CD8-positive, alpha-beta T cell (primary cell): ENCODE measurements at regions of chr16 and their contacts with region 1.

Region 1: DNA sequence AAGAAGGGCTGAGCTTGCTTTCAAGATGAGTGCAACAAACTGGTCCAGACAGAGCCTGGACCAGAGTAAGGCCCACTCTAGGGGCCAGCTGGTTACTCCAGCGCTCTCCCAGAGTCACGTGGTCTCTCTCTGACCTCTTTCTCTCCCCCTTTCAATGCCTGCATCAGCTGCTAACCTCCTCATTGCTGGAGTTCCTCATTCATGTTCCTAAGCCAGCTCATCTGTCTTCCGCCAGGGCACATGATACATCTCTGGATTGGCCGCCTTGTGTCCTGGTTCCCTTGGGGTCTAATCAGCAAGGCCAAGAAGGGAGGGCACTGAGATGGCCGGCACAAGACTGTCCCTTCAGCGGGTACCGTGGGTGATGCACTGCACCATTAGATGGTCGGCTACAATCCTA is 26.9 kb upstream of the ZFP90 start:
- DNase-seq: no peak
- ATAC-seq: no peak
- H3K4me3 ChIP-seq: no peak overlapping the region
- H3K4me3 Mint-ChIP-seq: no peak overlapping the region
- H3K27ac ChIP-seq: no peak overlapping the region
- H3K27ac Mint-ChIP-seq: no peak overlapping the region
- H3K4me1 ChIP-seq: peaks cover 6% of the 10 kb centered on the region
- H3K4me1 Mint-ChIP-seq: peaks cover 2% of the 10 kb centered on the region
- H3K27me3 ChIP-seq: no peaks in the 10 kb centered on the region
- H3K27me3 Mint-ChIP-seq: no peaks in the 10 kb centered on the region
- CTCF ChIP-seq: no peak

Region 2: DNA sequence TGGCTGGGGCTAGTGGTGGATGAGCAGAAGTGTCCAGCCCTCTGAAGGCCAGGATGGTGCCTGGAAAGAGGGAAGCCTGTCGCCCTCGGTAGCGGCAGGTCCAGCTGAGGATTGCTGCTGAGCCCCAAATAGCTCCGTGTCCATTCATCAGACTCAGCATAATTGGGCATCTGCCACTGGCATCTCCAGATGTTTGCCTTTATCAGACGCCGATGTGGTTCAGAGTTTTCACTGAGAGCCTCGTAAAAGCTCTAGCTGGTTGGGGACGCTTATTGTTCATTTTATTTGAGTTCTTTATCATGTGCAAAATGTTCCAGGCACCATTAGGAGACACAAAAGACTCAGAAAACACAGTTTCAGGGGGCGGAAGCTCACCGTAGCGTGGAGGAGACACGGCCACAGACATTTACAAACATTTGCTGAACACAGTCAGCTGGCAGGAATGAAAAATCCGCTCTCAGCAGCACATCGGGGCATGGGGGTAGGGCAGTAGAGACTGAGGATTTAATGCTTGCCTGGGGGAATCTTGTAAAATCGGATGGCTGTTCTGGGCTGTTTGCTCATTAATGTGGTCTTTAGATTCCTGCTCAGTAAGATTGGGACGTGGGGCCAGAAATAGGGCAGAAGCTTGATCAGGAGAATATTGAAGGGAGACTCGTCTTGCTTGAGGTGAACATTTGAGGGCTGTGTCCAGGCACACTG is 105.6 kb before region 1 on chr16:
- CTCF ChIA-PET with region 1: interaction called, 360 read pairs
- POLR2A ChIA-PET with region 1: no interaction called
- intact Hi-C with region 1: no loop called
- DNase-seq: no peak
- ATAC-seq: no peak
- H3K4me3 ChIP-seq: no peak overlapping the region
- H3K4me3 Mint-ChIP-seq: no peak overlapping the region
- H3K27ac ChIP-seq: no peak overlapping the region
- H3K27ac Mint-ChIP-seq: no peak overlapping the region
- H3K4me1 ChIP-seq: no peaks in the 10 kb centered on the region
- H3K4me1 Mint-ChIP-seq: no peaks in the 10 kb centered on the region
- H3K27me3 ChIP-seq: no peaks in the 10 kb centered on the region
- H3K27me3 Mint-ChIP-seq: peaks cover 4% of the 10 kb centered on the region
- CTCF ChIP-seq: no peak

Region 3: GRCh38 chr16:68448360-68448970 is 63.7 kb before region 1 on chr16 and contains the start of gene SMPD3:
- CTCF ChIA-PET with region 1: interaction called, 3 read pairs
- POLR2A ChIA-PET with region 1: no interaction called
- intact Hi-C with region 1: loop called (anchors 2 to 5 kb)
- DNase-seq: peak; percentile 96 to 99 (median 98)
- ATAC-seq: peak; percentile 98
- H3K4me3 ChIP-seq: peak within 1 kb of the TSS; percentile 46 to 49
- H3K4me3 Mint-ChIP-seq: peak within 1 kb of the TSS; percentile 68
- H3K27ac ChIP-seq: peak within 1 kb of the TSS in 1 of 2 experiments; percentile 37
- H3K27ac Mint-ChIP-seq: no peak within 1 kb of the TSS
- H3K4me1 ChIP-seq: peaks cover 26% of the 10 kb centered on the region
- H3K4me1 Mint-ChIP-seq: peaks cover 21% of the 10 kb centered on the region
- H3K27me3 ChIP-seq: peaks cover 18 to 25% of the 10 kb centered on the region in 2 experiments
- H3K27me3 Mint-ChIP-seq: peaks cover 24% of the 10 kb centered on the region
- CTCF ChIP-seq: no peak
- total RNA-seq, gene SMPD3: 0.24 to 0.25 TPM

Region 4: GRCh38 chr16:68470461-68471150 is 41.6 kb before region 1 on chr16:
- CTCF ChIA-PET with region 1: interaction called, 15 read pairs
- POLR2A ChIA-PET with region 1: no interaction called
- intact Hi-C with region 1: no loop called
- DNase-seq: peak in 5 of 9 experiments; percentile 5 to 60 (median 22)
- ATAC-seq: peak; percentile 59
- H3K4me3 ChIP-seq: peak overlapping the region; percentile 50 to 59
- H3K4me3 Mint-ChIP-seq: peak overlapping the region; percentile 86
- H3K27ac ChIP-seq: peak overlapping the region; percentile 10 to 70
- H3K27ac Mint-ChIP-seq: peak overlapping the region; percentile 90
- H3K4me1 ChIP-seq: peaks cover 36% of the 10 kb centered on the region
- H3K4me1 Mint-ChIP-seq: peaks cover 46% of the 10 kb centered on the region
- H3K27me3 ChIP-seq: no peaks in the 10 kb centered on the region
- H3K27me3 Mint-ChIP-seq: no peaks in the 10 kb centered on the region
- CTCF ChIP-seq: no peak

Region 5: DNA sequence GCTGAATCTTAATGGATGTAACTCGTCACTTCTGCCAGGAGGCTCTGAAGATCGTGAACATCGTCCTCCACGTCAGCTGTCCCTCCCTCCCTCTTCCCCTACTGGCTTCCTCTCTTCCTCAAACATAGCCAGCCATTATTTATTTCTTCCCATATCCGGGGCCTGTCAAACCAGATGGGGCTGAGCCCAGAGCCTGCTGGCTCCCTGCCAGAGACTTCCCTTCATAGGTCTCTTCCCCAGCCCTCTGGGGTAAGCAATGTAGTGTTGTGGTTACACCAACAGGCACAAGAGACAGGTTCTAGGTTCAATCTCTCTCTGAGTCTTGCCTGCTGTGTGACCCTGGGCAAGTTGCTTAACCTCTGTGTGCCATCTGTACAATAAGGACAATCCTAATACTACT is 13.2 kb before region 1 on chr16:
- CTCF ChIA-PET with region 1: interaction called, 11 read pairs
- POLR2A ChIA-PET with region 1: no interaction called
- intact Hi-C with region 1: no loop called
- DNase-seq: no peak
- ATAC-seq: no peak
- H3K4me3 ChIP-seq: no peak overlapping the region
- H3K4me3 Mint-ChIP-seq: no peak overlapping the region
- H3K27ac ChIP-seq: no peak overlapping the region
- H3K27ac Mint-ChIP-seq: no peak overlapping the region
- H3K4me1 ChIP-seq: no peaks in the 10 kb centered on the region
- H3K4me1 Mint-ChIP-seq: peaks cover 5% of the 10 kb centered on the region
- H3K27me3 ChIP-seq: no peaks in the 10 kb centered on the region
- H3K27me3 Mint-ChIP-seq: no peaks in the 10 kb centered on the region
- CTCF ChIP-seq: no peak